ENCODE measurements at regions of chr10 and their contacts with region 1.

Region 1: DNA sequence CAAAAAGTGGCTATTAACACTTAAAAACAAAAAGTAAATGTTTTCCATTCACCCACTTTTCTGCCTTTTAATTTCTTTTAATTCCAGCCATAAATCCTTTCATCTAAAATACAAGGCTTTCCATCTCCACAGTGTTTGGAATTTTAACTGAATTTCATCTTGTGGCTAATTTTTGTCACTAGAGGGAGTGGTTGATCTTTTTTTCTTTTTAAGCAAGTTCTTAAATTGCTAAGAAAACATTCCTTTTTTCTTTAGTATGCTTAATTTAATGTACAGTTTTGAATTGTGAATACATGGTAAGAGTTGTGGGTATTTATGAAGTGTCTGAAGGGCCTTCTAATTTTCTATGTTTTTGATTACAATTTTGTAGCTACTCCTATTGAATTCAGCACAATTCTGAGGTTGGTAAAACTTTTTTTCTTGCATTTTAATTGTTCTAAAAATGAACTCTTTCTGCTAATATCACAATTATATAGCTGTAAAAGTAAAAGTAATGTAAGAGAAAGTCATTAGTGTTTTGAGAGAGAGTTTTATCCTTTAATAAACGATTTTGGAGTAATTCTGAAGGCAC is 54.9 kb upstream of the ANK3 start:
- DNase-seq: peak in 1 of 2 experiments; percentile 43
- ATAC-seq: no peak
- H3K4me3 ChIP-seq: no peak overlapping the region
- H3K27ac ChIP-seq: no peak overlapping the region
- H3K4me1 ChIP-seq: peaks cover 14% of the 10 kb centered on the region; the same call in 2 of the 3 replicates
- CTCF ChIP-seq: peak; percentile 76
- EP300 ChIP-seq: no peak
- POLR2A ChIP-seq: no peak
- RAD21 ChIP-seq: peak; percentile 87 to 92

Region 2: DNA sequence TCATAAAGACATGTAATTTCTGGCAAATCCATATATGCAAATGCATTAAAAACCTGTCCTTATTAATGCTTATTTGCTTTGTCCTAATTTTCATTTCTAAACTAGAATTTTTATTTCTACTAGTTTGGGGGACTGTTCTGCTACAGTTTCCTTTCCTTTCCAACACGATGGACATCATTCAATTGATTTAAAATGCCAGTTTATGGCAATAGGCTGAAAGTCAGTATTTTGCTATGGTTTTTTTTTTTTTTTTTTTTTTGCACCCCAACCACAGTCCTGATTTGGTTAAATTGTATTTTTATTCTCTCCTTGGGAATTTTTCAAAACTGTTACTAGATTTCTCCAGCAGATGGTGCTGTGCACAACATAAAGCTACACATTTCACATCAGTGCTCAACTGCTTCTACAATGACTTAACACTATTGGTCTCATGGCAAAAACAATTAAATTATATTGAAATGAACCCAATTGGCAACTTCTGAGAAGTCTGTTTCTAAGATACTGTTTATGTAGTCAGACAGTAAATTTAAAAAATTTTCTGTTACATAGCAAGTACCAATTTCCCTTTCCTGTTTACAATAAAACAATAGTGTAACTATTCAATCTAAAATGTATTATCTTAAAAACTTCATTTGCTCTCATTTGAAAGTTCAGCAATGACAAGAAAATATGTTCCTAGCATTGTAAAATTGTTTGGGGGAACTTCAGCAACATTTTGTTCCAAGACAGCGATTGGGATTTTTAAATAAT is 344.4 kb before region 1 on chr10:
- CTCF ChIA-PET with region 1: interaction called, 24 read pairs
- POLR2A ChIA-PET with region 1: no interaction called
- DNase-seq: peak; percentile 24 to 64
- ATAC-seq: peak; percentile 59 to 80; a peak in 4 of 6 replicates
- H3K4me3 ChIP-seq: no peak overlapping the region
- H3K27ac ChIP-seq: no peak overlapping the region
- H3K4me1 ChIP-seq: peaks cover 10% of the 10 kb centered on the region; the same call in 2 of the 3 replicates
- CTCF ChIP-seq: peak; percentile 83
- EP300 ChIP-seq: no peak
- POLR2A ChIP-seq: no peak
- RAD21 ChIP-seq: peak; percentile 79 to 82

Region 3: DNA sequence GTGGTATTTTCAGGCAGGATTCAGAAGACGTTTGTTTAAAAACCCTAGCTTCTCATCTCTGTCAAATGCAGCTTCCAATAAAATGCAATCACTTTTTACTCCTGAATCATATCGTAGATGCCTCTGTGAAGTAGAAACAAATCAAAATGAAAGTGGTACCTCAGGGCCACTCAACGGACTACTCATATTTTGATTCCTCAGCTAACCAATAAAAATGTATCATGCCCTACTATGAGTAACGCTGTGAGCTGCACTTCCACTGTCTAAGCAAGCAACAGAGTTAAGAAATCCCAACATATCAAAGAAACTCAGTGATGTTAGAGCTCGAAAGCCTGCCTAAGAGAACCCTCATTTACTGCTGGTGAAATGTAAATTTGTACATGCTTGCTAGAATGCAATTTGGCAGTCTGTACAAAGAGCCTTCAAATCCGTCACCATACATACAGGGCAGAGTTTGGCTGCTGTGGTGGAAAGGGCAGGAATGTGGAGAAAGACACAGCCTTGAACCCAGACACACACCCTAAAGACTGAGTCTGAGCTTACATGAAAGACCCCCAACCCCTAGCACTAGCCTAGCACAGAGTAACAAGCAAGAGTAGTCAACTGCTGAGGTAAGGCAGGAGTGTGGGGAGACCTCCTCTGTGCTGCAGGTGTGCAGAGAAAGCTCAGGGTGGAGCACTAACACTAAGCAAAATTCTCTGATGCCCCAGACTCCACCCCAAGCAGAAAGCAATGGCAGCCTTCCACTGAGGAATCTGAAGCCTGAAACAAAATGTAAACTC is 206.4 kb before region 1 on chr10:
- CTCF ChIA-PET with region 1: interaction called, 12 read pairs
- POLR2A ChIA-PET with region 1: no interaction called
- DNase-seq: peak; percentile 13 to 35
- ATAC-seq: peak; percentile 87 to 91
- H3K4me3 ChIP-seq: no peak overlapping the region; the same call in 2 of the 3 replicates
- H3K27ac ChIP-seq: no peak overlapping the region
- H3K4me1 ChIP-seq: 0 out of 3 replicates have a peak, but pooled peaks cover 4% of the 10 kb centered on the region
- CTCF ChIP-seq: peak; percentile 24; the same call in 2 of the 3 replicates
- EP300 ChIP-seq: no peak
- POLR2A ChIP-seq: no peak
- RAD21 ChIP-seq: peak; percentile 55 to 62

Region 4: GRCh38 chr10:60305380-60305892 is 139.1 kb before region 1 on chr10:
- CTCF ChIA-PET with region 1: no interaction called
- POLR2A ChIA-PET with region 1: no interaction called
- DNase-seq: no peak
- ATAC-seq: no peak
- H3K4me3 ChIP-seq: no peak overlapping the region
- H3K27ac ChIP-seq: no peak overlapping the region
- H3K4me1 ChIP-seq: no peaks in the 10 kb centered on the region
- CTCF ChIP-seq: no peak
- EP300 ChIP-seq: no peak
- POLR2A ChIP-seq: no peak
- RAD21 ChIP-seq: no peak

Region 5: GRCh38 chr10:60572511-60573194 is 128.1 kb after region 1 on chr10:
- CTCF ChIA-PET with region 1: no interaction called
- POLR2A ChIA-PET with region 1: no interaction called
- DNase-seq: no peak
- ATAC-seq: peak; percentile 30 to 66; a peak in 4 of 6 replicates
- H3K4me3 ChIP-seq: 0 out of 3 replicates have a peak overlapping the region, but pooled peaks have one; percentile 3
- H3K27ac ChIP-seq: no peak overlapping the region
- H3K4me1 ChIP-seq: no peaks in the 10 kb centered on the region
- CTCF ChIP-seq: no peak
- EP300 ChIP-seq: no peak
- POLR2A ChIP-seq: no peak
- RAD21 ChIP-seq: no peak

Region 6: GRCh38 chr10:60646966-60647796 is 202.6 kb after region 1 on chr10:
- CTCF ChIA-PET with region 1: interaction called, 201 read pairs
- POLR2A ChIA-PET with region 1: no interaction called
- DNase-seq: peak; percentile 16 to 64
- ATAC-seq: peak in 1 of 2 experiments; percentile 79; a peak in 4 of 6 replicates
- H3K4me3 ChIP-seq: no peak overlapping the region
- H3K27ac ChIP-seq: no peak overlapping the region
- H3K4me1 ChIP-seq: peaks cover 30% of the 10 kb centered on the region; the same call in 2 of the 3 replicates
- CTCF ChIP-seq: peak; percentile 88
- EP300 ChIP-seq: no peak
- POLR2A ChIP-seq: no peak
- RAD21 ChIP-seq: peak; percentile 88 to 93

Region 7: GRCh38 chr10:60769406-60769805 is 324.8 kb after region 1 on chr10:
- CTCF ChIA-PET with region 1: interaction called, 13 read pairs
- POLR2A ChIA-PET with region 1: no interaction called
- DNase-seq: peak in 1 of 2 experiments; percentile 2
- ATAC-seq: peak; percentile 49 to 52; a peak in 4 of 6 replicates
- H3K4me3 ChIP-seq: no peak overlapping the region
- H3K27ac ChIP-seq: peak overlapping the region; percentile 36 to 39; a peak in 2 of 6 replicates
- H3K4me1 ChIP-seq: peaks cover 19% of the 10 kb centered on the region
- CTCF ChIP-seq: no peak
- EP300 ChIP-seq: no peak
- POLR2A ChIP-seq: no peak
- RAD21 ChIP-seq: no peak